K562 (cell line): ENCODE measurements at regions of chr12 and their contacts with region 1.

Region 1: DNA sequence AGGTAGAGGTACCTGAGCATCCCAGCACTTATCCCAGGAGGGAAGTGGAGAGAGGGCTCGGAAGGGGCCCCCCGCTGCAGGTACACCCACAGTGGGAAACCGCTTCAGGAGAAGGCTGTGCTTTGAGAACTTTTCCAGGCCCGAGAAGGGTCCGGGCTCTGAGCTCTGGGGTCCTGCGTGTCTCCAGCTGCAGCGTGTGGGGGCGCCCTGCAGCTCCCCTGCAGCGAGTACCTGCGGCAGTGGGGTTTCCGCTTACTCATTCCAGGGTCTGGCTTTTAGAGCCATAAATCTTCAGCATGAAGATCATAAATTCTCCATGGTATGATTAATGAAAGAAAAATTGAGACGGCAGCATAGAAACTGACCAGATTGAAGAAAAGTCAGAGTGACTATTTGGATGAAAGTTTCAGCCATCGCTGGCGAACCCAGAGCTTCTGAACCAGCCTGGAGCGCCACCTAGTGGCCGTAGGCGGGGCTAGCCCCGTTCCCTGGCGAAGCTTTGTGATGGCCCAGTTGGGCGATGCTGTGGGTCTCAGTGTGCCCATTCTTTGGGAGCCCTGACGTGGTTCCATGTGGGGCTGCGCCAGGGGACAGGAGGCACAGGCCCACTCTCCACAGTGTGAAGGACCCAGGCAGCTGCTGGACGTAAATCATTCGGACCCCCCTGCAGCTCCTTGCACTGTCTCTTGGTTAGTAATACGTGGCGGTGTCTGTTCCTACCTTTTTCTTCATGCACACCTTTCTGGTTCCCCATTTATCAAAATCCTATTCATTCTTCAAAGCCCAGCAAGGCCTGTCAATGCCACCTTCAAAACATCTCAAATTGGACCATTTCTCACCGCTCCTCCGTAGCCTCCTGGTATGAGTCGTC is 198.2 kb downstream of the TSPAN9 start:
- DNase-seq: peak; percentile 63 to 83 (median 80)
- ATAC-seq: peak; percentile 95
- H3K4me3 ChIP-seq: no peak overlapping the region
- H3K27ac ChIP-seq: no peak overlapping the region
- H3K4me1 ChIP-seq: no peaks in the 10 kb centered on the region
- H3K27me3 ChIP-seq: peaks cover 2 to 42% of the 10 kb centered on the region in 2 experiments; a peak in 3 of 5 replicates
- CTCF ChIP-seq: peak; percentile 78 to 87 (median 83)
- EP300 ChIP-seq: no peak
- POLR2A ChIP-seq: no peak
- RAD21 ChIP-seq: peak; percentile 58 to 82

Region 2: DNA sequence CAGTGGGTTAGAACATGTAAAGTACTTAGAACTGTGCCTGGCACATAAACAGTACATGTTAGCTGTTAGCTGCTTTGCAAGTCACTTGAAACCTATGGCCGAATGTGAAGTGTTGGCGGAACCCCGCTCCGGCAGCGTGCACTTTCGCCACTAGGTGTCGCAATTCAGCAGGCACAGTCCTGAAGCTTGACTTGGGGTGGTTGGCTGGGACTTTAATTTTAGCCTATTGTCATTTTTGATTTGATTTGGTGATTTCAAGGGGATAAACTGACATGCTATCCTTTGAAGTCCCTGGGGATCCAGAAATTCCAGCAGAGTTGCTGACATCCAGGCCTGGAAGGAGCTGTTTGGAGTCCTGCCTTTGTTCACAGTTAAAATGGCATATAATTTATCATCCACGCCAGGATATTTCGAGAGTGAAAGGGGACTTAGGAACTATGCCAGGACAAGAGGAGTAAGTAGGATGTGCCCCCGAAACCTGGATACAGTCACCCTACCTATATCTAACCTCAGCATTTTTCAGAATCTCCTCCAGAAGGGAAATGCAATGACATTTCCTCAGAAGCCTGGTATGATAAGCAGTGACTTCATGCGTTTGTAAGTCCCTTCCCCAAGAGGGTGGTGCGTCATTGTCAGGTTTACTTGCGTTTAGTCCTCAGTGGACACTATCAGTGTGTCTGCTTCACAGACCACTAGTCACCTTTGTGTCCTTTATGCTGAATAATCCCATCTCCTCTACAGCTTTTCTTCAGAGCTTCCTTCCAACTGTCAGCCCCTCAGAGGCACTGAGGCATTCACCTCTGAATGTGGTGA is 201.8 kb before region 1 on chr12:
- CTCF ChIA-PET with region 1: no interaction called
- POLR2A ChIA-PET with region 1: no interaction called
- in situ Hi-C with region 1: no loop called
- intact Hi-C with region 1: loop called (anchors 10 kb)
- DNase-seq: peak; percentile 74 to 81 (median 76)
- ATAC-seq: peak; percentile 88
- H3K4me3 ChIP-seq: no peak overlapping the region
- H3K27ac ChIP-seq: no peak overlapping the region
- H3K4me1 ChIP-seq: peaks cover 2 to 19% of the 10 kb centered on the region in 2 experiments; a peak in 3 of 5 replicates
- H3K27me3 ChIP-seq: peaks cover 9 to 10% of the 10 kb centered on the region in 2 experiments
- CTCF ChIP-seq: peak; percentile 85 to 92 (median 90)
- EP300 ChIP-seq: no peak
- POLR2A ChIP-seq: no peak
- RAD21 ChIP-seq: peak; percentile 45 to 73

Region 3: GRCh38 chr12:3129301-3130056 is 145.9 kb before region 1 on chr12:
- CTCF ChIA-PET with region 1: no interaction called
- POLR2A ChIA-PET with region 1: no interaction called
- in situ Hi-C with region 1: loop called (anchors 5 kb)
- intact Hi-C with region 1: no loop called
- DNase-seq: no peak
- ATAC-seq: no peak
- H3K4me3 ChIP-seq: no peak overlapping the region
- H3K27ac ChIP-seq: no peak overlapping the region
- H3K4me1 ChIP-seq: no peaks in the 10 kb centered on the region
- H3K27me3 ChIP-seq: peaks cover 2 to 23% of the 10 kb centered on the region in 2 experiments; a peak in 4 of 5 replicates
- CTCF ChIP-seq: no peak
- EP300 ChIP-seq: no peak
- POLR2A ChIP-seq: no peak
- RAD21 ChIP-seq: no peak

Region 4: GRCh38 chr12:3135522-3136461 is 139.6 kb before region 1 on chr12:
- CTCF ChIA-PET with region 1: interaction called, 6 read pairs
- POLR2A ChIA-PET with region 1: no interaction called
- in situ Hi-C with region 1: loop called (anchors 5 kb)
- intact Hi-C with region 1: loop called (anchors 1 kb)
- DNase-seq: peak; percentile 67 to 75 (median 72)
- ATAC-seq: peak; percentile 90
- H3K4me3 ChIP-seq: no peak overlapping the region
- H3K27ac ChIP-seq: no peak overlapping the region
- H3K4me1 ChIP-seq: no peaks in the 10 kb centered on the region
- H3K27me3 ChIP-seq: peaks cover 2 to 26% of the 10 kb centered on the region in 2 experiments; a peak in 3 of 5 replicates
- CTCF ChIP-seq: peak; percentile 71
- EP300 ChIP-seq: no peak
- POLR2A ChIP-seq: no peak
- RAD21 ChIP-seq: peak; percentile 46 to 72

Region 5: DNA sequence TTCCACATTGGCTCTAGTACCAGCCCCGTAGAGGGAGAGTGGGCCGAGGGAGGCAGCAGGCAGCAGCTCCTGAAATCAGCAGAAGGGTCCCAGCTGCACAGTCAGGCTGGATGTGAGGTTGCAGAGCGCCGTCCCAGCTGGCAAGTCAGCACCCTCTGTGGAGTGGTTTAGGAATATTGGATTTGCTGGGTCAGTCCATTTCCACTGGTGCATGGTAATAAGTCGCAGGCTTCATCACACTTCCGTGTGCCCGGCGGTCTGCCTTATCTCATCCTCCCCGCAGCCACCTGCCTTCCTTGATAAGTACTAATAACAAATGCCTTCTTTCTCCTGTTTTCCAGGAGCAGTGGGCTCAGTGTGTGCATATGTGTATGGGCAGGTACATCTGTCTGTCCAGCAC is 85.3 kb before region 1 on chr12:
- CTCF ChIA-PET with region 1: no interaction called
- POLR2A ChIA-PET with region 1: no interaction called
- in situ Hi-C with region 1: no loop called
- intact Hi-C with region 1: no loop called
- DNase-seq: peak in 1 of 4 experiments; percentile 7
- ATAC-seq: no peak; the same call in 2 of the 3 replicates
- H3K4me3 ChIP-seq: no peak overlapping the region
- H3K27ac ChIP-seq: no peak overlapping the region
- H3K4me1 ChIP-seq: no peaks in the 10 kb centered on the region
- H3K27me3 ChIP-seq: peaks cover 0 to 22% of the 10 kb centered on the region in 2 experiments; a peak in 1 of 5 replicates
- CTCF ChIP-seq: no peak
- EP300 ChIP-seq: no peak
- POLR2A ChIP-seq: no peak
- RAD21 ChIP-seq: no peak

Region 6: DNA sequence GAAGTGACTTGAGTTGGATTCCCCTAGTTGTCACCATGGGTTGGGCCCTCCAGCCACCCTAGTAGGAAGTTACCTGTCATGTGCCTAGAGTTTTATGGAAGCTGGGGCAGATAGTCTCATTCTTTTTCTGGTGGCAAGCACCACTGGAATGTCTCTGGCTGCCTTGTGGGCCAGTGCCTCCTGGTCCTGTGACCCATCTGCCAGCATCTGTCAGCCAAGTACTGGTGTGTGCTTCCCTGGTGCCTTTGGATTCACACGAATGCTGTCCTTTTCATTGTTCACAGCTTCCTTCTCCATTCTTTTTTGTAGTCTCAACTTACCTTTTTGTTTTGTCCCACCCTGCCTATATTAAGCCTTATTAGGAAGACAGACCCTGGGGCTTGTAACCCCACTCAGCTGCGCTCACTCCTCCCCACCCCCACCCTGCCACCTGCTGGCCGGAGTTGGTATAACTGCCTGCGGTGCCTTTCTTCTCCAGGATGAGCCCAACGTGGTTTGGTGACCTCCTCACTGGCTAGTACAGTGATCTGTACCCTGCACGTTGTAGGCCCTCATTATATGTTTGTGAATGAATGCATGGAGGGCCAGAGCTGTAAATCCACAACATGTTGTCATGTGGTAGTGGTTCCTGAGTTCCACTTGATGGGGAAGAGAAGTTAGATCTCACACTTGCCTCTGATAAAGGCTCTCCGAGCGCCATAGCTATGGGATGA is 72.5 kb before region 1 on chr12:
- CTCF ChIA-PET with region 1: no interaction called
- POLR2A ChIA-PET with region 1: no interaction called
- in situ Hi-C with region 1: no loop called
- intact Hi-C with region 1: loop called (anchors 10 kb)
- DNase-seq: peak; percentile 49 to 78 (median 75)
- ATAC-seq: peak; percentile 83
- H3K4me3 ChIP-seq: no peak overlapping the region
- H3K27ac ChIP-seq: no peak overlapping the region
- H3K4me1 ChIP-seq: peaks cover 0 to 5% of the 10 kb centered on the region in 2 experiments; a peak in 1 of 5 replicates
- H3K27me3 ChIP-seq: peaks cover 0 to 12% of the 10 kb centered on the region in 2 experiments; a peak in 1 of 5 replicates
- CTCF ChIP-seq: peak; percentile 63 to 84 (median 69)
- EP300 ChIP-seq: no peak
- POLR2A ChIP-seq: no peak
- RAD21 ChIP-seq: peak; percentile 22 to 45; a peak in 3 of 4 replicates